ENCODE measurements at regions of chr2 and their contacts with region 1.

Region 1: GRCh38 chr2:128090945-128091725 is at the start of gene UGGT1:
- DNase-seq: peak; percentile 97 to 99 (median 99)
- H3K4me3 ChIP-seq: peak within 1 kb of the TSS; percentile 87 to 99 (median 95)
- H3K4me3 Mint-ChIP-seq: peak within 1 kb of the TSS; percentile 92
- H3K27ac ChIP-seq: peak within 1 kb of the TSS; percentile 90 to 98
- H3K27ac Mint-ChIP-seq: peak within 1 kb of the TSS; percentile 84 to 94 (median 92)
- H3K4me1 ChIP-seq: peaks cover 19 to 38% of the 10 kb centered on the region in 2 donors
- H3K4me1 Mint-ChIP-seq: peaks cover 36% of the 10 kb centered on the region
- H3K27me3 ChIP-seq: no peaks in the 10 kb centered on the region
- H3K27me3 Mint-ChIP-seq: no peaks in the 10 kb centered on the region
- CTCF ChIP-seq: no peak
- polyA plus RNA-seq, gene UGGT1: 8.7 to 15.8 (median 13.8) TPM

Region 2: DNA sequence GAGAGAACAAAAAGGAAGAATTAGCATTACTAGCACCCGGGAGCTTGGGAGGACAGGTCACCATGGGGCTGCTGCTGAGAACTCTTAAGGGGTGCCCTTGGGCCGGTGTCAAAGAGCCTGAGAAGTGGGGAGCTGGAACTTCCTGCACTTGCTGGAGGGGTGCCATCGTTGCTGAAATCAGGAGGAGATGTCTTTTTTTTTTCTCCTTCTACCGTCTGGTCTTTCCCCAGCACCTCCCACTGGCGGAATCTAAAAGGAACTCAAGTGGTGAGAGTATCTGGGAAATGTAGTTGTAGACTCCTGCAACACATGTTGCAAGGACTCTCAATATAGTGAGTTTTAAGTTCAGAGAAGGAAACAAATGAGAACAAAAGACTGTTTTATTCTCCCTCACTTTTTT is 199.3 kb before region 1 on chr2:
- intact Hi-C with region 1: loop called (anchors 10 kb)
- DNase-seq: no peak
- H3K4me3 ChIP-seq: no peak overlapping the region
- H3K4me3 Mint-ChIP-seq: peak overlapping the region in 1 of 2 donors; percentile 54
- H3K27ac ChIP-seq: no peak overlapping the region
- H3K27ac Mint-ChIP-seq: peak overlapping the region in 2 of 7 donors; percentile 49 to 58
- H3K4me1 ChIP-seq: peaks cover 14 to 19% of the 10 kb centered on the region in 2 donors
- H3K4me1 Mint-ChIP-seq: peaks cover 20% of the 10 kb centered on the region
- H3K27me3 ChIP-seq: no peaks in the 10 kb centered on the region
- H3K27me3 Mint-ChIP-seq: peaks cover 0 to 3% (median 0%) of the 10 kb centered on the region in 3 donors
- CTCF ChIP-seq: no peak

Region 3: DNA sequence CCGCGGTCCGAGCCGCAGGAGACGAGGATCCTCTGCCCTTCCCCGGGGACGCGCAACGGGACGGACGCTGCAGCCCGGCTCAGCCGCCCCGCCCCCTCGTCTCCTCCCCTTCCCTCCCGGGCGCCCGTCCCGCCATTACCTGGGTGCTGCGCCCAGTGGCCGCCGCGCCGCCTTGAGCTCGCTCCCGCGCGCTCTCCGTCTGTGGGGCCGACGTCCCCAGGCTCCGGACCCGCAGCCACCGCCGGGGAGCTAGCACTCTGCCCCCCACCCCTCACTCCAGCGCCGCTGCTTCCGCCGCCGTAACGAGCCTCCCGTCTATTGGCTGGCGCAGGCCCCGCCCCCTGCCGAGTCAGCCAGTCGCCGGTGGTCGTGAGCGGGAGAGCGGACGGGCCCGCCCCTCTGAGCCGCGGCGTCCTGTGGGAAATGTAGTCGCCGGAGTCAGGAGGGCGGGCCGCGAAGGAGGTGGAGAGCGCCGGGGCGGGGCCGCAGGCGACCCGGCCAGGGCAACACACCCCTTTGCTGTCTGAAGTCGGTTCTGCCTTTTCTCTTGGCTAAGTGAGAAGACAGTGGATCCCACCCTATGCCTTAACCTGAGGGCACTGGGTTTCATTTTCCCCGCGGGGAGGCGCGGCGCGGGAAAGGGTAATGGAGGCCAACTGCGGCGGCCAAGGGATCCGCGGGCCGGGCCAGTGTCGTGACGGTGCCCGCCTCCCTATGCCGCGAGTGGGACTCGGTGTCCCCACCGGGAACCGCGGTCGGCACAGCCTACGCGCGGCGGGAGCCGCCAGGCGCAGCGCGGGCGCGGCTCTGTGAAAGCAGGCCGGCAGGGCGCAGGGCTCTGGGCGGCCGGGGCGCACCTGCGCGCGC is 63.1 kb before region 1 on chr2 and contains the start of gene SAP130:
- intact Hi-C with region 1: loop called (anchors 2 to 5 kb)
- DNase-seq: peak; percentile 92 to 95 (median 93)
- H3K4me3 ChIP-seq: peak within 1 kb of the TSS; percentile 86 to 95 (median 92)
- H3K4me3 Mint-ChIP-seq: peak within 1 kb of the TSS; percentile 93 to 95
- H3K27ac ChIP-seq: peak within 1 kb of the TSS; percentile 58 to 83
- H3K27ac Mint-ChIP-seq: peak within 1 kb of the TSS; percentile 78 to 93 (median 89)
- H3K4me1 ChIP-seq: peaks cover 18 to 19% of the 10 kb centered on the region in 2 donors
- H3K4me1 Mint-ChIP-seq: peaks cover 22% of the 10 kb centered on the region
- H3K27me3 ChIP-seq: no peaks in the 10 kb centered on the region
- H3K27me3 Mint-ChIP-seq: peaks cover 0 to 4% (median 4%) of the 10 kb centered on the region in 3 donors
- CTCF ChIP-seq: no peak
- polyA plus RNA-seq, gene SAP130: 2.8 to 16.4 (median 6.4) TPM

Region 4: DNA sequence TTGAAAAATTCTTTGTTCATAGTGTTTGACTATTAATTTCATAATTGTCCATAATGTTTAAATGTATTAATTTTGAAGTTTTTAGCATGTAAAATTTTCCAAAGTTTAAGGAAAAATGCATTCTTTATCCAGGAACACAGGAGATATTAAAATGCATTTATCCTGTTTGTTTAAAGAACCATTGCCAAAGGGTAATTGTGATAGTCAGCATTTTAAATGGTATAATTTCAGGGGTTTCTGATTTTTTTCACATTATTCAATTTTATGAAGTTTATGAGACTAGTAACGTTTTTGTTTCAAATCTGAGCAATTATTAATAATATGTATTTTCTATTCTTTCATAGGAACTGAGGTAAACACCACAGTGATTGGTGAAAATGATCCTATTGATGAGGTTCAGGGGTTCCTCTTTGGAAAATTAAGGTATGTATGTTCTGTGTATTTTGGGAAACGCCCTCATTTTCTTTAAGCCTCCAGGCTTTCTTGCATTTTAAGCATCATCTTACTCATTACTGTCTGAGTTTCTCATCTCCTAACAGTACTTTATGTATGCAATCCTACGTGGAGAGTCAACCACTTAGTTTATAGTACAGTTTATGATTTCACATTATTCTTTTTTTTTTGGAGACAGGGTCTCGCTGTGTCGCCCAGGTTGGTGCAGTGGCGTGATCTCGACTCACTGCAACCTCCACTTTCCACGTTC is 24.9 kb after region 1 on chr2:
- intact Hi-C with region 1: no loop called
- DNase-seq: no peak
- H3K4me3 ChIP-seq: no peak overlapping the region
- H3K4me3 Mint-ChIP-seq: no peak overlapping the region
- H3K27ac ChIP-seq: no peak overlapping the region
- H3K27ac Mint-ChIP-seq: no peak overlapping the region
- H3K4me1 ChIP-seq: no peaks in the 10 kb centered on the region
- H3K4me1 Mint-ChIP-seq: no peaks in the 10 kb centered on the region
- H3K27me3 ChIP-seq: no peaks in the 10 kb centered on the region
- H3K27me3 Mint-ChIP-seq: no peaks in the 10 kb centered on the region
- CTCF ChIP-seq: no peak

Measured in CD14-positive monocyte (primary cell).